ENCODE measurements at regions of chr5 and their contacts with region 1.

Region 1: GRCh38 chr5:72194846-72195245 is 87.6 kb downstream of the MAP1B start:
- DNase-seq: peak; percentile 78
- H3K4me3 Mint-ChIP-seq: no peak overlapping the region
- H3K27ac Mint-ChIP-seq: peak overlapping the region; percentile 16
- H3K4me1 Mint-ChIP-seq: peaks cover 15% of the 10 kb centered on the region
- H3K27me3 Mint-ChIP-seq: peaks cover 66% of the 10 kb centered on the region

Region 2: GRCh38 chr5:72093217-72093616 is 101.6 kb before region 1 on chr5:
- CTCF ChIA-PET with region 1: no interaction called
- POLR2A ChIA-PET with region 1: no interaction called
- intact Hi-C with region 1: loop called (anchors 5 kb)
- DNase-seq: no peak
- H3K4me3 Mint-ChIP-seq: no peak overlapping the region
- H3K27ac Mint-ChIP-seq: no peak overlapping the region
- H3K4me1 Mint-ChIP-seq: peaks cover 11% of the 10 kb centered on the region
- H3K27me3 Mint-ChIP-seq: peaks cover 29% of the 10 kb centered on the region

Measured in activated CD4-positive, alpha-beta memory T cell treated with anti-CD3 and anti-CD28 coated beads for 36 hours (primary cell).